Activated CD4-positive, alpha-beta memory T cell treated with anti-CD3 and anti-CD28 coated beads for 36 hours (primary cell): ENCODE measurements at regions of chr4 and their contacts with region 1.

Region 1: DNA sequence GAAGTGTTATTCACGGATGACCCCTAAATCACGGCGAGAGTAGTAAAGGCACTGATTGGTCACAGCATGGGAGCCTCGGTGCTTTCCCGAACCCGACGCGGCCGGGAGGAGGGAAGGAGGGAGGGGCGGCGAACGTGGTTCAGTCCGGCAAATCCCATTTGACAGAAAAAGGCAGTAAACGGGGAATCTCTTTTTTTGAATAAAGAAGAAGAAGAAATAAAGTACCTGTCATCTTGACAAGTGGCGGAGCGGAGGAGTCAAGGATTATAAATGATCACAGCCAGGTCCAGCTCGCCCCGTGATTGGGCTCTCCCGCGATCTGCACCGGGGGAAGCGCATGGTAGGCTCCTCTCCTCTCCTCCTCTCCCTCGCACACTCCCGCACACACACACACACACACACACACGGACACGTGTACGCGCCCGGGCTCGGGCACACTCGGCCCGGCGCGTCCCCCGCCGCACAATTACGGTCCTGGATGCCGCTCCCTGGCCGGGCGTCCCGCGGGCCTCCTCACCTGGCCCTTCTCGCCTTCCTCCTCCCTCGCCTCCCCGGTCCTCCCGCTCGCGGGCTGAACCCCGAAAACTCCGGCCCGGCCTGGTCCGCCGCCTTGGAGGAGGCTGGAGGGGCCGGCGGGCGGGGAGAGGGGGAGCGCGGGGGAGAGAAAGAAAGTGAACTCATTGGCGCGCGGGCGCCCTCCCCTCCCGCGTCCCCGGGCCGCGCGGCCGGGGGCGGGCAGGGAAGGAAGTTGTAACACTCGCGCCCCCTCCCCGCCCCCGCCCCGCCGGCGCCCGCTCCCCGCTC is 99.2 kb upstream of the TENM3 start:
- DNase-seq: no peak
- H3K4me3 Mint-ChIP-seq: peak overlapping the region; percentile 46
- H3K27ac Mint-ChIP-seq: no peak overlapping the region
- H3K4me1 Mint-ChIP-seq: peaks cover 21% of the 10 kb centered on the region
- H3K27me3 Mint-ChIP-seq: peaks cover 60% of the 10 kb centered on the region

Region 2: DNA sequence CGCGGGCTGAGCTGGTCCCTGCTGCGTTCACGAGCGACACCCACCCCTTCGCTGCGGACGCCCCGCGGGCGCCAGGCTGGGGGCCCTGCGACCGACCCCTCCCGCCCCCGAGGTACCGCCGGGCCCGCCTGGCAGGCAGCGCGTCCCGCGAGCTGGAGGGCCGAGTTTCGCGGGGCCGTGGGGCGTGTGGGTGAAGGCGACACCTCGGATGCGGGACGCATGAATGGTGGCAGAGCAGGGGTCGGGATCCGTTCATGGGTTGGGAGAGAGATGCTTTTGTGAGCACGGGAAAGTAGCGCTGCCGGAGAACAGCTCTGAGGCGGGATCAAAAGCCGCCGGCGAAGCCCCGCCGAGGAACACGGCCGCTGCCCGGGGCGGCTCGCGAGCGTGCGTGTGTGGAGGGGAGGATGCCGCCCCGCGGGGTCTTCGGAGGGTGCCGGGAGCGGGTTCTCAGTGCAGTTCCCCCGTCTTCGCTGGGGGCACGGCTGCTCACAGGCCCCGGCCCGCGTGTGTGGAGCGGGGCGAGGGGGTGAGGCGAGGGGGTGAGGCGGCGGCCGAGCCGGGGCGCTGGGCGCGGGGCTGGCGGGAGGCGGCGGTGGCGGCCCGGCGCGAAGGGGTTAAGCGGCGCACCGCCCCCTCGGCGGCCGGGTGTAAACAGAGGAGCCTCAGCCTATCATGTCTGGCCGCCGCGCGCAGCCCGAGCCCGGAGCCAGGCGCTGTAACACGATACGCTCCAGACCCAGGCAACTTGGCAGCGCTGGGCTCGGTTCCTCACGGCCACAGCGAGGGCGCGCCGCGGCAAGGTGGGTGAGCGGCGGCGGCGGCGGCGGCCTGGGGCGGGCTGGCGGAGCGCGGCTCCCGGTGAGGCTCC is 304.5 kb after region 1 on chr4:
- CTCF ChIA-PET with region 1: no interaction called
- POLR2A ChIA-PET with region 1: no interaction called
- intact Hi-C with region 1: loop called (anchors 5 kb)
- DNase-seq: peak; percentile 37
- H3K4me3 Mint-ChIP-seq: peak overlapping the region; percentile 53
- H3K27ac Mint-ChIP-seq: no peak overlapping the region
- H3K4me1 Mint-ChIP-seq: peaks cover 15% of the 10 kb centered on the region
- H3K27me3 Mint-ChIP-seq: peaks cover 54% of the 10 kb centered on the region

Region 3: DNA sequence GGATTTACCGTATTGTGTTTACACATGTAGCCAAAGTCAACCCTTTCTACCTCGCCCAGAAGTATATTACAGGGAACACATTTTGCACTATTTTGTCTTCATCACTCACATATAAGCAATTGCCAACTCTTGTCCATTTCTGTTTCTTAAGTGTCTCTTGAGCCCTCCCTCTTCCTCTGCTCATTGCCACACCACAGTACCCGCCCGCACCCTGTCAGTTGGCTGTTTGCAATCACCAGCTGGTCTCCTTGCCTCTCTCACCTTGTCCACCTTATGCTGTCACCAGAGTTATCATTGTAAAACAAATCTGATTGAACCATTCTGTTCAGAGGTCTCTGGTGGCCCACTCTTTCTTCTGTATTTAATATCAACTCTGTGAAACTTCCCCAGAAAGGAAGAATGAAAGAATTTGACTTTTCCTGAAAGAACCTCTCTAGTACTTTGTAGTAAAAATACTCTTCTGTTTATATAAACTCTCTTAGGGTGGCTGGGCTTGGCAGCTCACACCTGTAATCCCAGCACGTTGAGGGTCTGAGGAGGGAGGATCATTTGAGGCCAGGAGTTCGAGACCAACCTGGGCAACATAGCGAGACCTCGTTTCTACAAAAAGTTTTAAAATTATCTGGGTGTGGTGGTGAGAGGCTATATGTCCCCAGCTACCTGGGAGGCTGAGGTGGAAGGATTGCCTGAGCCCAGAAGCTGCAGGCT is 1411.0 kb after region 1 on chr4:
- CTCF ChIA-PET with region 1: no interaction called
- POLR2A ChIA-PET with region 1: no interaction called
- intact Hi-C with region 1: no loop called
- DNase-seq: no peak
- H3K4me3 Mint-ChIP-seq: no peak overlapping the region
- H3K27ac Mint-ChIP-seq: no peak overlapping the region
- H3K4me1 Mint-ChIP-seq: no peaks in the 10 kb centered on the region
- H3K27me3 Mint-ChIP-seq: peaks cover 2% of the 10 kb centered on the region